CD14-positive monocyte (primary cell): ENCODE measurements at regions of chr16 and their contacts with region 1.

Region 1: DNA sequence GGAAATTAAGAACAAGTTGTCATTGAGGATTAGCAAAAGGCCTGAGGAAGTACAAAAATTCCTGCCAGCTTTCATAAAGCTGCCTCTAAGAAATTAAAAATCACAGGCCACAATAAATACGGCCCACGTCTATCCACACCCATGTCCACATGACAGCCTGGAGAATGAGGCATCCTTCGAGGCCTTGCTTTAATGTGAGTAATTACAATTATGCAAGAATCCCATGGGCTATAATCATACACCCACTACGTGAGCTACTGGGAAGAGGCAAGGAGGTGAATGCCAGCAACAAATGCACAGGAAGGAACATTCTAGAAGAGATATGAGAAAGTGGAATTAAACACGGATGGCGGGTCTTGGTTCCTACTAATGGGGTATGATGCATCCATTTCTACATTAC is 65.4 kb upstream of the ZFHX3 start:
- DNase-seq: peak; percentile 39 to 64 (median 40)
- H3K4me3 ChIP-seq: no peak overlapping the region
- H3K4me3 Mint-ChIP-seq: no peak overlapping the region
- H3K27ac ChIP-seq: peak overlapping the region in 1 of 2 donors; percentile 12
- H3K27ac Mint-ChIP-seq: peak overlapping the region in 4 of 7 donors; percentile 13 to 77 (median 66)
- H3K4me1 ChIP-seq: peaks cover 22 to 24% of the 10 kb centered on the region in 2 donors
- H3K4me1 Mint-ChIP-seq: peaks cover 30% of the 10 kb centered on the region
- H3K27me3 ChIP-seq: no peaks in the 10 kb centered on the region
- H3K27me3 Mint-ChIP-seq: no peaks in the 10 kb centered on the region
- CTCF ChIP-seq: no peak

Region 2: DNA sequence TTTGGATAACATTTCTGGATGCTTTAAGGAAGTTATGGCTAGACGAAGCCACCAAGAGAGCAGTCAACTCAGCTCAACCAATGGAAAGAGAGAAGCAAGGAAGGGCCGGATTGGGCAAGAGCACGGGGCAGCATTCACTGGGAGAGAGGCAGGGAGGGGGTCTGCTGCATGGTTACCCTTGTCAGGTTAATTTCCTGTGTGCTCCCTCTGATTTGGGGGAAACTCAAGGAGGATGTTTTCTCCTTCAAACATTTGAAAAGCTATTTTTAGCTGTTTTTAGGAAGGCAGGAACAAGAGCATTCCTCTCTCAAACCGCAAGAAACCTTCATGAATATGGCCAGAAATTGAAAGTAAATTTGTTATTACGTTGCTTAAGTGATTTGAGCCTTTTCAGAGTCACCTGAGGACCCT is 53.1 kb after region 1 on chr16:
- intact Hi-C with region 1: loop called in 1 of 2 experiments (anchors 10 kb)
- DNase-seq: peak; percentile 37 to 65 (median 62)
- H3K4me3 ChIP-seq: peak overlapping the region; percentile 19 to 78 (median 75)
- H3K4me3 Mint-ChIP-seq: peak overlapping the region; percentile 79 to 87
- H3K27ac ChIP-seq: peak overlapping the region; percentile 9 to 79
- H3K27ac Mint-ChIP-seq: peak overlapping the region; percentile 30 to 91 (median 80)
- H3K4me1 ChIP-seq: peaks cover 15 to 17% of the 10 kb centered on the region in 2 donors
- H3K4me1 Mint-ChIP-seq: peaks cover 29% of the 10 kb centered on the region
- H3K27me3 ChIP-seq: no peaks in the 10 kb centered on the region
- H3K27me3 Mint-ChIP-seq: peaks cover 0 to 5% (median 2%) of the 10 kb centered on the region in 3 donors
- CTCF ChIP-seq: no peak